Activated naive CD8-positive, alpha-beta T cell treated with anti-CD3 and anti-CD28 coated beads, Interleukin-2, amount 10 ng/mL, durations not matched to agents 7 days and 5 days (primary cell): ENCODE measurements at regions of chr19 and their contacts with region 1.

Region 1: DNA sequence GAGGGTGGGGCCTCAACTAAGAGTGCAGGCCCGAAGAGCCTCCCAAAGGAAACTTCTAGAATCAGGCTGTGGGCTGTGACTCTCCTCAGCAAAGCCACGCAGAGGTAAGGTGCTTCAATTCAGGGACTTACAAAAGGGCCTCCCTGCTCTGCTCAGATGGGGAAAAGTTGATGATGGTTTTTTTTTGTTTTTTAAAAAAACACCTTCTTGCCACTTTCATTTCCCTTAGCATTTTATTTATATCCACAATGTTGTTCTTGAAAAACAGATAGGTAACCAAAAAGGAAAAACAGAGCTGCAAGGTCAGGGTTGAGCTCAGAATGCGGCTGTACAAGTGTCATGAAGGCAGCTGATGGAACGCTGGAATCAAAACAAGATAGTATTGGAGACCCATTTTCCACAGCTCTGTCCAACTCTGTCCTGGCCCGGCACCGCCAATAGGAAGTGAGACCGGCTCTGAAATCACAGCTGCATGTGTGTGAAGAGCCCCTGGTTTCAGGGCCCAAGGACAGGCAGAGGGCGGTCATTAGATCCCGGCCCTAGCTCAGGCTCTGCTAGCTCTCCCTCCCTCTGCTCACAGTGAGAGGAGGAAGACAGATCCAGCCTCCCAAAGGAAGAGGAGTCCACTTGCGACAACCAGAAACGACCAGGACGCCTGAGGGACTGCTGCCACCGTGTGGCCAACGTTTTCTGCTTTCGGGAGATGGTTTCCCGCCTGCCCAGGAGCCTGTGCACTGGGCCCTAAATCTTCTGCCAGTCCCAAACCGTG is 58.3 kb downstream of the KLF2 start:
- DNase-seq: peak; percentile 82
- ATAC-seq: peak; percentile 53
- H3K4me3 Mint-ChIP-seq: peak overlapping the region; percentile 11
- H3K27ac Mint-ChIP-seq: peak overlapping the region; percentile 43
- H3K4me1 Mint-ChIP-seq: peaks cover 24% of the 10 kb centered on the region
- H3K27me3 Mint-ChIP-seq: no peaks in the 10 kb centered on the region

Region 2: GRCh38 chr19:16247353-16248182 is 135.4 kb before region 1 on chr19:
- POLR2A ChIA-PET with region 1: interaction called, 11 read pairs
- DNase-seq: peak; percentile 91
- ATAC-seq: peak; percentile 85
- H3K4me3 Mint-ChIP-seq: no peak overlapping the region
- H3K27ac Mint-ChIP-seq: peak overlapping the region; percentile 34
- H3K4me1 Mint-ChIP-seq: peaks cover 15% of the 10 kb centered on the region
- H3K27me3 Mint-ChIP-seq: peaks cover 7% of the 10 kb centered on the region

Region 3: DNA sequence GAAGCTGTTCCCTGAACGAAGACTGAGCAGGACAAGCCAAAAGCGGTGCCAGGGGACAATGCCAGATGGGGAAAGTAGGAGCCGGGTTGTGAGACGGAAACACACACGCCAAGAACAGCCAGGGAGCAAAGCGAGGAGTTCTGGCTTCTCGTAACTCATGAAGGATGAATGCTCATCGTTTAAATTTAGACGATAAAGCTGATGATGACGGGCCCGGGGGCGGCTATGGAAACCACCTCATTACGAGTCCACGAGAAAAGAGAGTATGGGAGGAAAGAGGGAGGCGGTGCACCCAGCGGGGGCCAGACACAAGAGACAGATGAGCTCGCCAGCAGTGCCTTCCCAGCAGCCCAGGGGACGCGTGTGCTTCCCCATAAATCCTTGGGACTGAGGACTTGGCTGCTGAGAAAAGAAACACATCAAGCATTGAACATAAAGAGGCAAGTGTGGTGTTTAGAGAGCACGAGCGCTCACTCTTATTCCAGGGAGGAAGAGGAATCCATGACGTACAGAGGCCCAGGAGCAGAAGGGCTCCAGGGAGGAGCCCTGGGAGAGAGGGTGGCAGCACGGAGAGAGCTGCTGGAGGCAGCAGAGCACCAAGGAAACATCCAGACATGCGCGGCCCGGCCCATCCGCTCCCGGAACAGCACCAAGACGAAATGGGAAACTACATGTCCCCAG is 18.1 kb after region 1 on chr19:
- POLR2A ChIA-PET with region 1: no interaction called
- DNase-seq: no peak
- ATAC-seq: no peak
- H3K4me3 Mint-ChIP-seq: no peak overlapping the region
- H3K27ac Mint-ChIP-seq: no peak overlapping the region
- H3K4me1 Mint-ChIP-seq: no peaks in the 10 kb centered on the region
- H3K27me3 Mint-ChIP-seq: no peaks in the 10 kb centered on the region

Region 4: GRCh38 chr19:16441661-16442162 is 58.8 kb after region 1 on chr19:
- POLR2A ChIA-PET with region 1: no interaction called
- DNase-seq: peak; percentile 45
- ATAC-seq: no peak
- H3K4me3 Mint-ChIP-seq: no peak overlapping the region
- H3K27ac Mint-ChIP-seq: no peak overlapping the region
- H3K4me1 Mint-ChIP-seq: peaks cover 18% of the 10 kb centered on the region
- H3K27me3 Mint-ChIP-seq: no peaks in the 10 kb centered on the region